GM12878 (cell line): ENCODE measurements at regions of chr4 and their contacts with region 1.

Region 1: DNA sequence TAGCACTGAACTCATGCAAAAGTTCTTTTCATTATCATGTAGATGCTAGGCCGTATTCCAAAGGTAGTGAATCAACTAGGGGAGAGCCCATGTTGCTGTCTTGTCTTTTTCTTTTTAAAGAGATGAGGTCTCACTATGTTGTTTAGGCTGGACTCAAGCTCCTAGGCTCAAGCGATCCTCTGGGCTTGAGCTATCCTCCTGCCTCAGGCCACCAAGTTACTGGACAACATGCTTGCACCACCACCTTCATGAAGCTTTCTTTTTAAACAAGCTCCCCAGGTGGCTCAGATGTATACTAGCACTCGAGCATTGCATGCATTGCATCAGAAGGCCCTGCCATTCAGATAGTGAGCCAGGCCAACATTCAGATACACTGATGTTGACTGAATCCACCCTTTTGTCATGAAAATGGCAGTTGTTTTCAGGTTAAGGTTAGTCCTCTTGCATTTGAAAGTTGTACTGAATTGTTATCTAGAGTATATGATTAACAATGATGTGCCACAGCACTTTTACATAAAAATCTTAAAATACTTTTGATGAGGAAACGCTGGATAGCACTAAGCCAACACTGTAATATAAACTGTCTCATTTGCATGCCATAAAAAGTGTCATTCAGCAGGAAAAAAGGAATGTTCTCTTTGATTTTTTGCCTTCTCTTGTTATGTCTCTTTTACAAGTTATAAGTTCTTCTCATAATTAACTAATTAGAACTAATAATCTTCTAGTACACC is 76.7 kb downstream of the FNIP2 start:
- DNase-seq: no peak
- ATAC-seq: no peak
- H3K4me3 ChIP-seq: no peak overlapping the region
- H3K27ac ChIP-seq: no peak overlapping the region
- H3K4me1 ChIP-seq: no peaks in the 10 kb centered on the region
- H3K27me3 ChIP-seq: no peaks in the 10 kb centered on the region; a peak in 1 of 4 replicates
- CTCF ChIP-seq: no peak
- EP300 ChIP-seq: no peak
- POLR2A ChIP-seq: no peak
- RAD21 ChIP-seq: no peak

Region 2: GRCh38 chr4:158259955-158260575 is 585.4 kb before region 1 on chr4:
- CTCF ChIA-PET with region 1: no interaction called
- POLR2A ChIA-PET with region 1: no interaction called
- RAD21 ChIA-PET with region 1: no interaction called
- SMC1A ChIA-PET with region 1: no interaction called
- in situ Hi-C with region 1: loop called (anchors 10 kb)
- intact Hi-C with region 1: no loop called
- DNase-seq: no peak
- ATAC-seq: peak; percentile 65
- H3K4me3 ChIP-seq: no peak overlapping the region
- H3K27ac ChIP-seq: no peak overlapping the region
- H3K4me1 ChIP-seq: no peaks in the 10 kb centered on the region
- H3K27me3 ChIP-seq: no peaks in the 10 kb centered on the region
- CTCF ChIP-seq: peak in 2 of 3 experiments; percentile 24 to 41; a peak in 2 of 6 replicates
- EP300 ChIP-seq: no peak
- POLR2A ChIP-seq: no peak
- RAD21 ChIP-seq: peak; percentile 36; the same call in 1 of the 2 replicates

Region 3: GRCh38 chr4:158384407-158384806 is 461.1 kb before region 1 on chr4:
- CTCF ChIA-PET with region 1: no interaction called
- POLR2A ChIA-PET with region 1: no interaction called
- RAD21 ChIA-PET with region 1: no interaction called
- SMC1A ChIA-PET with region 1: no interaction called
- in situ Hi-C with region 1: no loop called
- intact Hi-C with region 1: no loop called
- DNase-seq: no peak
- ATAC-seq: no peak
- H3K4me3 ChIP-seq: no peak overlapping the region
- H3K27ac ChIP-seq: no peak overlapping the region
- H3K4me1 ChIP-seq: no peaks in the 10 kb centered on the region
- H3K27me3 ChIP-seq: no peaks in the 10 kb centered on the region
- CTCF ChIP-seq: no peak
- EP300 ChIP-seq: no peak
- POLR2A ChIP-seq: no peak
- RAD21 ChIP-seq: no peak

Region 4: GRCh38 chr4:158729716-158730559 is 115.5 kb before region 1 on chr4:
- CTCF ChIA-PET with region 1: interaction called, 61 read pairs
- POLR2A ChIA-PET with region 1: no interaction called
- RAD21 ChIA-PET with region 1: interaction called, 11 read pairs
- SMC1A ChIA-PET with region 1: interaction called, 24 read pairs
- in situ Hi-C with region 1: loop called (anchors 5 kb)
- intact Hi-C with region 1: no loop called
- DNase-seq: peak; percentile 44
- ATAC-seq: peak; percentile 97
- H3K4me3 ChIP-seq: no peak overlapping the region
- H3K27ac ChIP-seq: no peak overlapping the region
- H3K4me1 ChIP-seq: no peaks in the 10 kb centered on the region
- H3K27me3 ChIP-seq: peaks cover 0 to 2% of the 10 kb centered on the region in 2 experiments; a peak in 1 of 4 replicates
- CTCF ChIP-seq: peak; percentile 81 to 97 (median 85)
- EP300 ChIP-seq: no peak
- POLR2A ChIP-seq: no peak
- RAD21 ChIP-seq: peak; percentile 85

Region 5: GRCh38 chr4:158778156-158778711 is 67.2 kb before region 1 on chr4:
- CTCF ChIA-PET with region 1: interaction called, 61 read pairs
- POLR2A ChIA-PET with region 1: no interaction called
- RAD21 ChIA-PET with region 1: interaction called, 33 read pairs
- SMC1A ChIA-PET with region 1: interaction called, 42 read pairs
- in situ Hi-C with region 1: no loop called
- intact Hi-C with region 1: no loop called
- DNase-seq: peak; percentile 60
- ATAC-seq: peak; percentile 96
- H3K4me3 ChIP-seq: no peak overlapping the region
- H3K27ac ChIP-seq: no peak overlapping the region
- H3K4me1 ChIP-seq: peaks cover 10% of the 10 kb centered on the region; the same call in 1 of the 2 replicates
- H3K27me3 ChIP-seq: 0 out of 4 replicates have a peak, but pooled peaks cover 0 to 2% of the 10 kb centered on the region in 2 experiments
- CTCF ChIP-seq: no peak
- EP300 ChIP-seq: no peak
- POLR2A ChIP-seq: no peak
- RAD21 ChIP-seq: no peak

Region 6: DNA sequence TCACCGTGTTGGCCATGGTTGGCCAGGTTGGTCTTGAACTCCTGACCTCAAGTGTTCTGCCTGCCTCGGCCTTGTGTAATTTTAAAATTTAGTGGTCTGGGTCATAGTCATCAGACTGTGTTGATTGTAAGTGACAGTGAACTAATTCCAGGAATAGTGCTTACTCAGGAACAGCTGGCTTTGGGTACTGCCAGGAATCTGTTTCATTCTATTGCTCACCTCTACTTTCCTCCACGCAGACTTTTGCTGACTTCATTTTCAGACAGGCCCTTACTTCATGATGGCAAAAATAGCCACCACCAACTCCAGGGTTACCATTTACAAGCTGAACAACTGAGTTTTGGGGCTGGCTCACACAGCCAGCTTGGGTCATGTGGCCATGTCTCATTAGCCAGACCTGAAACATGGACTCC is 22.0 kb before region 1 on chr4:
- CTCF ChIA-PET with region 1: interaction called, 10 read pairs
- POLR2A ChIA-PET with region 1: interaction called, 4 read pairs
- RAD21 ChIA-PET with region 1: interaction called, 7 read pairs
- SMC1A ChIA-PET with region 1: interaction called, 50 read pairs
- in situ Hi-C with region 1: no loop called
- intact Hi-C with region 1: no loop called
- DNase-seq: no peak
- ATAC-seq: no peak
- H3K4me3 ChIP-seq: no peak overlapping the region
- H3K27ac ChIP-seq: no peak overlapping the region
- H3K4me1 ChIP-seq: peaks cover 22% of the 10 kb centered on the region
- H3K27me3 ChIP-seq: no peaks in the 10 kb centered on the region
- CTCF ChIP-seq: no peak
- EP300 ChIP-seq: no peak
- POLR2A ChIP-seq: no peak
- RAD21 ChIP-seq: no peak